Activated CD4-positive, alpha-beta T cell treated with anti-CD3 and anti-CD28 coated beads, Interleukin-2, amount 10 ng/mL, durations not matched to agents 24 days and 14 days (primary cell): ENCODE measurements at regions of chr10 and their contacts with region 1.

Region 1: GRCh38 chr10:68156373-68157185 is 47.3 kb downstream of the MYPN start:
- DNase-seq: peak; percentile 88
- H3K4me3 Mint-ChIP-seq: no peak overlapping the region
- H3K27ac Mint-ChIP-seq: no peak overlapping the region
- H3K4me1 Mint-ChIP-seq: peaks cover 3% of the 10 kb centered on the region
- H3K27me3 Mint-ChIP-seq: no peaks in the 10 kb centered on the region

Region 2: GRCh38 chr10:67697724-67698131 is 458.9 kb before region 1 on chr10:
- intact Hi-C with region 1: loop called (anchors 10 kb)
- DNase-seq: peak; percentile 80
- H3K4me3 Mint-ChIP-seq: no peak overlapping the region
- H3K27ac Mint-ChIP-seq: no peak overlapping the region
- H3K4me1 Mint-ChIP-seq: peaks cover 2% of the 10 kb centered on the region
- H3K27me3 Mint-ChIP-seq: peaks cover 39% of the 10 kb centered on the region

Region 3: DNA sequence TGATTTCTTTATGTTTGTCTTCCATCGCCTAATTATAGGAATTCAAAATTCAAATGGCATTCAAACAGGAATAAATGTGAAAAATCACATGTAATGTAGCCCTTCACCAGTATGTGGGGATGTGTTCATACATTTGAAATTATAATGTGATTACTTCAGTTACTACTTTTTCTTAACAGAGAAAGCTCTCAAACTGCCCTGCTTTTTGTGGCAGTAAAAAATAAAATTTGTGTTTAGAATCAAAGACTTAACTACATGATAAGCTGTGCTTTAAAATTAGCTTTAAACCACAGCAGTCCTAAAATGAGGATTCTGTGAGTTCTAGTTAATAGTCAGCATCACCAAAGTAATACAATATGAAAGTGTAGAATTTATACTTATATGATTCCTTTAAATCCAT is 73.7 kb before region 1 on chr10:
- intact Hi-C with region 1: loop called (anchors 2 kb)
- DNase-seq: no peak
- H3K4me3 Mint-ChIP-seq: no peak overlapping the region
- H3K27ac Mint-ChIP-seq: no peak overlapping the region
- H3K4me1 Mint-ChIP-seq: peaks cover 5% of the 10 kb centered on the region
- H3K27me3 Mint-ChIP-seq: peaks cover 13% of the 10 kb centered on the region